IMR-90 (cell line): ENCODE measurements at regions of chr3 and their contacts with region 1.

Region 1: DNA sequence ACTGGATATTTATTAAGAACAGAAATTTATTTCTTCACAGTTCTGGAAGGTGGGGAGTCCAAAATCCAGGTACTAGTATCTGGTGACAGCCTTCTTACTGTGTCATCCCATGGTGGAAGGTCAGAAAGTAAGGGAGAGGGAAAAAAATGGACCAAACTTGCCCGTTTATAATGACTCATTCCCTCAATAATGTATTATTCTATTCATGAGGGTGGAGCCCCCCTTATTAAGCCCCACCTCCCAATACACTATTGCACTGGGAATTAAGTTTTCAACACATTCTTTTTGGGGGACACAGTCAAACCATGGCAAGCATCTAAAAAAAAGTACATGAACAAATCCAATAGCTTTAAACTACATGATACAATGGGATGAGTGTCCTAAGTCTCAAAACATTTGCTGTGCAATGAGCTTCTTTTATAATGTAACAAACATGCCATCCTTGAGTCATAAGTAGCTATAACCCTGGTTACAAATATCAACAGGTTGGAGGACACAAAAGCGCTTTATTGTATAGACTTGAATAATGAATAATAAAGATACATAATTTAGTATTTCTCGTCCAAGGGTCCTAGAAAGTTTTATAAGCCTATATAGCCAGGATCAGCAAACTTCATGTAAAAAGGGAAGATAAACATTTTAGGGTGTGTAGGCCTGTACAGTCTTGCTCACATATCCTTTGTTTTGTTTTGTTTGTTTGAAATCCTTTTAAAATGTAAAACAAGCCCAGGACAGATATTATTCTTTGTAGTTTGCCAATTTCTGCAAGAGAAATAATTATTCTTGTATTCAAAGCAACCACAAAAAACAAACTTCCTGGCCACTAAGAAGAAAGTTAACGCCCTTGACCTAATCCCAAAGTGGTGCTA is 160.6 kb upstream of the RAP2B start:
- DNase-seq: no peak
- ATAC-seq: no peak
- H3K4me3 ChIP-seq: no peak overlapping the region
- H3K27ac ChIP-seq: no peak overlapping the region
- H3K4me1 ChIP-seq: no peaks in the 10 kb centered on the region
- H3K27me3 ChIP-seq: no peaks in the 10 kb centered on the region
- CTCF ChIP-seq: no peak
- POLR2A ChIP-seq: no peak
- RAD21 ChIP-seq: no peak

Region 2: DNA sequence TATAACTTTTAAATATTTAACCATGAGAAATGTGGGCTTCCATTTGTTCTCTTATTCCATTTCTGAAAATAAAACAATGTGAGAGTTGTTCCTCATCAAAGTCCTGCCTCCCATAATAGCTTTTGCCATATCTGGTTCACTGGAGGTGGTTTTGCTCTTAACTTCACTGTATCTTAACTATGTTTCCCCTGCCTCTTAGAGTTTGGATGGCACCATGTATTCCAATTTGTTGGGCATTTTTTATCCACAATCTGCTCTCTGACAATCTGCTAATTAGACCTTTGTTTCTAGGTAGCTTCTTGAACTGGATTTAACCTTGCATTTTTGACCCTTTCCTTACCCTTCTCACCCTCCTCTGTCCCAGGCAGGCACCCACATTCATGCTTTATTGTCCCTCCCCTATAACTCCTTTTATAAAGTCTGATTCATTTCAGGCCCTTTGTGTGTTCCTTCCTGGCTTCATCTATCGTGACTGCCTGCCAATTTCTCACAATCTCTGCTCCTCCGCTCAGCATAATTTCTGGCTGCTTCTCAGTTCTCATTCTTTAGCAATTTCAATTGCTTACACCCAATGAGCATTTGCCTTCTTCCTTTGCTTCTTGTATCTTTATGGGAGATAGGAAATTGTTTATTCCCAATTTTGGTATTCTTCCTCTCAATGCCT is 975.6 kb after region 1 on chr3:
- CTCF ChIA-PET with region 1: no interaction called
- POLR2A ChIA-PET with region 1: no interaction called
- dilution Hi-C with region 1: no loop called
- in situ Hi-C with region 1: loop called (anchors 25 kb)
- intact Hi-C with region 1: no loop called
- DNase-seq: no peak
- ATAC-seq: no peak
- H3K4me3 ChIP-seq: no peak overlapping the region
- H3K27ac ChIP-seq: no peak overlapping the region
- H3K4me1 ChIP-seq: no peaks in the 10 kb centered on the region
- H3K27me3 ChIP-seq: no peaks in the 10 kb centered on the region
- CTCF ChIP-seq: no peak
- POLR2A ChIP-seq: no peak
- RAD21 ChIP-seq: no peak

Region 3: GRCh38 chr3:154243353-154243752 is 1241.9 kb after region 1 on chr3:
- CTCF ChIA-PET with region 1: no interaction called
- POLR2A ChIA-PET with region 1: no interaction called
- dilution Hi-C with region 1: no loop called
- in situ Hi-C with region 1: loop called (anchors 25 kb)
- intact Hi-C with region 1: no loop called
- DNase-seq: peak; percentile 15
- ATAC-seq: peak; percentile 48
- H3K4me3 ChIP-seq: no peak overlapping the region
- H3K27ac ChIP-seq: no peak overlapping the region
- H3K4me1 ChIP-seq: peaks cover 3% of the 10 kb centered on the region; the same call in 1 of the 2 replicates
- H3K27me3 ChIP-seq: no peaks in the 10 kb centered on the region
- CTCF ChIP-seq: no peak
- POLR2A ChIP-seq: no peak
- RAD21 ChIP-seq: no peak